Panc1 (cell line): ENCODE measurements at regions of chr19 and their contacts with region 1.

Region 1: DNA sequence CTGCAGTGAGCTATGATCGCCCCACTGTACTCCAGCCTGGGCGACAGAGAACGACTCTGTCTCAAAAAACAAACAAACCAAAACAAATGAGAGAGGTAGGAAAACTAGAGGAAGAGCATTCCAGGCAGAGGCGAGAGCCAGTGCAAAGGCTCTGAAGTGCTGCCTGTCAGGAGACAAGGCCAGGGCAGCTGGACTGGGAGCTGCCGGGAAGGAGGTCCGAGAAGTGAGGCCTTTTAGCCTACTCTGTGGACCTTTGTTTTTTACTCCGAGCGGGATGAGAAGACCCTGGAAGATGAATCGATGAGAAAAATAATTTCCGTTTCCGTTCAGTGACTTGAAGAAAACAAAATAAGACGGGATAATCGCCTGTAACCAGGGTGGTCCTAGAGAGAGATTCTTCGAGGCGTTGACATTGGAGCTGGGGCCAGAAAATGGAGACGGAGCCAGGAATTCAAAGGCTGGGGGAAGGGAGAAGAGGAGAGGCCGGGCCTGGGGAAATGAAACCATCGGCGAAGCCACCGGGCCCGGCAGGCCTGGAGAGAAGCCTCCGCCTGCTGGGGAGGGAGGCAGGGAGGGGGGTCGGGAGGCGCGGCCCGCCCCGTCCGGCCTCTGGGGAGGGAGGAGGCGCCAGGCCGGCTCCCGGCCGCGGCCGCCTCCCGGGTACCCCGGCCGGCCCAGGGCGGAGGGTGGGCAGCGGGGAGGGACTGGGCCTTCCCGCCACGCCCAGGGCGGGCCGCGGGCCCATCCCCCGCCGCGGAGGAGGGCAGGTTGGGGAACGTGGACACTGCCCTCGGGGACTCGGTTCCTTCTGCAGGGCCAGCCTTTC is 7.8 kb upstream of the SERTAD1 start:
- DNase-seq: no peak
- ATAC-seq: peak; percentile 98
- H3K4me3 ChIP-seq: peak overlapping the region; percentile 47 to 67
- H3K27ac ChIP-seq: peak overlapping the region; percentile 97
- H3K4me1 ChIP-seq: peaks cover 6% of the 10 kb centered on the region
- H3K27me3 ChIP-seq: no peaks in the 10 kb centered on the region
- CTCF ChIP-seq: no peak

Region 2: GRCh38 chr19:40070058-40070457 is 363.5 kb before region 1 on chr19:
- CTCF ChIA-PET with region 1: no interaction called
- POLR2A ChIA-PET with region 1: no interaction called
- in situ Hi-C with region 1: no loop called
- intact Hi-C with region 1: no loop called
- DNase-seq: no peak
- ATAC-seq: no peak
- H3K4me3 ChIP-seq: no peak overlapping the region
- H3K27ac ChIP-seq: no peak overlapping the region
- H3K4me1 ChIP-seq: no peaks in the 10 kb centered on the region
- H3K27me3 ChIP-seq: no peaks in the 10 kb centered on the region
- CTCF ChIP-seq: no peak

Region 3: GRCh38 chr19:40381321-40381720 is 52.3 kb before region 1 on chr19:
- CTCF ChIA-PET with region 1: no interaction called
- POLR2A ChIA-PET with region 1: no interaction called
- in situ Hi-C with region 1: no loop called
- intact Hi-C with region 1: no loop called
- DNase-seq: no peak
- ATAC-seq: no peak
- H3K4me3 ChIP-seq: no peak overlapping the region
- H3K27ac ChIP-seq: no peak overlapping the region
- H3K4me1 ChIP-seq: no peaks in the 10 kb centered on the region
- H3K27me3 ChIP-seq: no peaks in the 10 kb centered on the region
- CTCF ChIP-seq: no peak

Region 4: DNA sequence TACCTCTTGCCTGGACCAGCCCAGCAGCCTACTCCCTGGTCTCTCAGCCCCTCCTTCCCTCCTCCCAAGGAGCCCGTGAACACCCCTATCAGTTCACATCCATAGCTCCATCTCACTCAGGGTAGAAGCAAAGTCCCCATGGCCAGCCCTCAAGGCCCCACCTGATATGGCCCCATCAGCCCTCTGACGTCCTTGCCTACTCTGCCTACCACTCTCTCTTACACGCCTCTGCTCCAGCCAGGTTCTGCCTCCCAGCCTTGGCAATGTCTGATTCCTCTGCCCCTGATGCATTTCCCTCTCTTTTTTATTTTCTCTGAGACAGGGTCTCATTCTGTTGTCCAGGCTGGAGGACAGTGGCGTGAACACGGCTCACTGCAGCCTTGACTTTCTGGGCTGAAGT is 18.4 kb after region 1 on chr19:
- CTCF ChIA-PET with region 1: no interaction called
- POLR2A ChIA-PET with region 1: no interaction called
- in situ Hi-C with region 1: no loop called
- intact Hi-C with region 1: no loop called
- DNase-seq: no peak
- ATAC-seq: no peak
- H3K4me3 ChIP-seq: no peak overlapping the region
- H3K27ac ChIP-seq: no peak overlapping the region
- H3K4me1 ChIP-seq: no peaks in the 10 kb centered on the region
- H3K27me3 ChIP-seq: no peaks in the 10 kb centered on the region
- CTCF ChIP-seq: no peak

Region 5: GRCh38 chr19:40465557-40466150 is 32.0 kb after region 1 on chr19 and contains the start of gene BLVRB:
- CTCF ChIA-PET with region 1: interaction called, 5 read pairs
- POLR2A ChIA-PET with region 1: interaction called, 16 read pairs
- in situ Hi-C with region 1: no loop called
- intact Hi-C with region 1: no loop called
- DNase-seq: peak; percentile 92
- ATAC-seq: peak; percentile 96
- H3K4me3 ChIP-seq: peak within 1 kb of the TSS; percentile 68 to 82
- H3K27ac ChIP-seq: peak within 1 kb of the TSS; percentile 82
- H3K4me1 ChIP-seq: peaks cover 10% of the 10 kb centered on the region; the same call in 1 of the 2 replicates
- H3K27me3 ChIP-seq: no peaks in the 10 kb centered on the region
- CTCF ChIP-seq: no peak
- total RNA-seq, gene BLVRB: 45.6 TPM

Region 6: DNA sequence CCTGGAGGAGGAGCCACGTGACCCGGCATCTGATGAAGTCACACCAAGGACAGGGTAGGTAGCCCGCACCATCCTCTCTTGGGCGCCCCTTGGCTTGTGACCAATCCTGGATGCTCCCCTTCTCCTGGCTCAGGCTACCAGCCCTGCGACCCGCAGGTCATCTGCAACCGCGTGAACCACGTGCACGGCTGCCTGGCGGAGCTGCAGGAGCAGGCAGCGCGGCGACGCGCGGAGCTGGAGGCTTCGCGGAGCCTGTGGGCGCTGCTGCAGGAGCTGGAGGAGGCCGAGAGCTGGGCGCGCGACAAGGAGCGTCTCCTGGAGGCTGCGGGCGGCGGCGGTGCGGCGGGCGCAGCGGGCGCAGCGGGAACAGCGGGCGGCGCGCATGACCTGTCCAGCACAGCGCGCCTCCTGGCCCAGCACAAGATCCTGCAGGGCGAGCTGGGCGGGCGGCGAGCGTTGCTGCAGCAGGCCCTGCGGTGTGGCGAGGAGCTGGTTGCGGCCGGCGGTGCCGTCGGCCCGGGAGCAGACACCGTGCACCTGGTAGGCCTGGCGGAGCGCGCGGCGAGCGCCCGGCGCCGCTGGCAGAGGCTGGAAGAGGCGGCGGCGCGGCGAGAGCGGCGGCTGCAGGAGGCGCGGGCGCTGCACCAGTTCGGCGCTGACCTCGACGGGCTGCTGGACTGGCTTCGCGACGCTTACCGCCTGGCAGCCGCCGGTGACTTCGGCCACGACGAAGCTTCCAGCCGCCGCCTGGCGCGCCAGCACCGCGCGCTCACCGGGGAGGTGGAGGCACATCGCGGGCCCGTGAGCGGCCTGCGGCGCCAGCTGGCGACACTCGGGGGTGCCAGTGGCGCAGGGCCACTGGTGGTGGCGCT is 79.1 kb after region 1 on chr19:
- CTCF ChIA-PET with region 1: no interaction called
- POLR2A ChIA-PET with region 1: no interaction called
- in situ Hi-C with region 1: no loop called
- intact Hi-C with region 1: no loop called
- DNase-seq: no peak
- ATAC-seq: peak; percentile 85
- H3K4me3 ChIP-seq: peak overlapping the region; percentile 21 to 41
- H3K27ac ChIP-seq: no peak overlapping the region
- H3K4me1 ChIP-seq: no peaks in the 10 kb centered on the region
- H3K27me3 ChIP-seq: peaks cover 2% of the 10 kb centered on the region; the same call in 1 of the 2 replicates
- CTCF ChIP-seq: no peak; the same call in 1 of the 2 replicates

Region 7: DNA sequence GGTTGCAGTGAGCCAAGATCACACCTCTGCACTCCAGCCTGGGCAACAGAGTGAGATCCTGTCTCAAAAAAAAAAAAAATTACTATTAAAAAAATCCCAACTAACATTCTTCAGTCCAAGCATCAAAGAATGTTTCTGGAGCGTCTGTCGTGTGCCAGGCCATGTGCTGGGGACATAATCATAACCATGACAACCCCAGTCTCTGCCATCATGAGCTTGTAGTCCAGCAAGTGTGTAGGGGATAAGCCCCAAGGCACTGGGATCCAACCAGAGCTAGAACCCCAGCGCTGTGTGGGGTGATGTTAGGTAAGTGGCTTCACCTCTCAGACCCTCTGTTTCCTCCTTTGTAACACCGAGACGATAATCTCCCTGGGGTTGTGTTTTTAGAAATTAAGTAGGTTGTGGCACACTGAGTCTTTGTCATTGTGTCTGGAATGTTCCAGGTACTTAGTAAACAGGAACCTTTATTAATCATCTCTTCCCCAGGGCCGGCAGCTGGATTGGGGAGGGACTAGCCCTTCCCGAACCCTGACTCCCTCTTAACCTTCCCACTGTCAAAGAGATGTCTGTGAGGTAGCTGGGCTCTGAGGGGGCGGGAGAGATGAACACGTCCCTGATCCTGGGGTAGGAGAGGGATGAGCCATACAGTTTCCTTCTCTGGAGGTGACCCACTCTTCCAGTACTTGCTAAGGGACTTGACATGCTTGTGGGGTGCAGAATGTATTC is 288.5 kb after region 1 on chr19:
- CTCF ChIA-PET with region 1: no interaction called
- POLR2A ChIA-PET with region 1: interaction called, 10 read pairs
- in situ Hi-C with region 1: no loop called
- intact Hi-C with region 1: no loop called
- DNase-seq: no peak
- ATAC-seq: no peak
- H3K4me3 ChIP-seq: no peak overlapping the region
- H3K27ac ChIP-seq: no peak overlapping the region
- H3K4me1 ChIP-seq: no peaks in the 10 kb centered on the region
- H3K27me3 ChIP-seq: no peaks in the 10 kb centered on the region
- CTCF ChIP-seq: no peak